ENCODE measurements at regions of chr4 and their contacts with region 1.

Region 1: GRCh38 chr4:52250154-52250553 is 199.1 kb downstream of the SPATA18 start:
- DNase-seq: peak; percentile 29 to 85
- H3K4me3 ChIP-seq: no peak overlapping the region
- H3K27ac ChIP-seq: no peak overlapping the region
- H3K4me1 ChIP-seq: peaks cover 0 to 12% of the 10 kb centered on the region in 2 donors
- H3K27me3 ChIP-seq: no peaks in the 10 kb centered on the region
- CTCF ChIP-seq: no peak

Region 2: GRCh38 chr4:52704661-52705060 is 454.5 kb after region 1 on chr4:
- intact Hi-C with region 1: loop called (anchors 5 kb)
- DNase-seq: no peak
- H3K4me3 ChIP-seq: no peak overlapping the region
- H3K27ac ChIP-seq: no peak overlapping the region
- H3K4me1 ChIP-seq: peaks cover 0 to 3% of the 10 kb centered on the region in 2 donors
- H3K27me3 ChIP-seq: no peaks in the 10 kb centered on the region
- CTCF ChIP-seq: no peak